Heart left ventricle (tissue), 16 donors: ENCODE measurements at regions of chr12 and their contacts with region 1.

Region 1: DNA sequence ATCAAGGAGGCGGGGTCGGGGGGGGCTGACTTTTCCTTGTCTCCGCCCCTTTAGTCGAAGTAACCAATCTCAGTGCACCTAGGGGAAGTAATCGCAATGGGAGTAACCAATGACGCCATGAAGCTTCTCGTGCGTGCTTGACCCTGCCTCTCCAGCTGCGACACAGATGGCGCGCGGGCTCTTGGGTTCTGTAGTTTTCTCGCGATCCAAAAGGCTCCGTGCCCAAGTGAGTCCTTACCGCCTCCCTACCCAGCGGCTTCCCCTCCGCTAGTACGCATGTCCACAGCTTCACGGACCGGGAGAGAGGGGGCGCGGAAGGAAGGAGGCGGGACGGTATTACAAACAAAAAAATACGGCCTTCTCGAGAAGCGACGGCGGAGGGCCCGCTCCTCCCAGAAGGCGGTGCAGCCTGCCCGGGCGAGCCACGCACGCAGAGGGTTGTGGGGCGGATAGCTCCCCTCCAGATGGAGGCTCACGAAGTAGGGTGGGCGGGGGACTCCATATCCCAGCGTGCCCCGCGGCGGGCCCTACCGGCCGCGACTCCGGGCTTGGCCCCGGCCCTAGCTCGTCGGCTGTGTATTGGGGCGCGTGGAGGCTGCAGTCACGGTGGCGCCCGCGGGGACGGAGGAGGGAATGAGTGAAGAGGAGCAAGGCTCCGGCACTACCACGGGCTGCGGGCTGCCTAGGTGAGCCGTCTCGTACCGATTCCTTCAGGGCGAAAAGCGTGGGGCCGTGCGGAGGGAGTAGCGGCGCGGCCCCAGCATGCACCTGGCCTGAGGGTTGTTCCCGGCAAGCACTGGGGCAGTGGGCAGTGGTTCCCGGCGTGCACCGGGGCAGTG is at the start of gene TARBP2:
- DNase-seq: peak; percentile 97 to 98 (median 98)
- ATAC-seq: peak; percentile 86 to 92 (median 88)
- H3K4me3 ChIP-seq: peak within 1 kb of the TSS; percentile 37 to 98 (median 77)
- H3K27ac ChIP-seq: peak within 1 kb of the TSS; percentile 90 to 100 (median 97)
- H3K4me1 ChIP-seq: peaks cover 5 to 61% (median 35%) of the 10 kb centered on the region in 12 donors
- H3K27me3 ChIP-seq: no peaks in the 10 kb centered on the region
- CTCF ChIP-seq: peak in 4 of 12 donors; percentile 13 to 34 (median 24)
- POLR2A ChIP-seq: peak in 1 of 2 donors; percentile 46
- total RNA-seq, gene TARBP2: 7.8 to 19.5 (median 10.1) TPM

Region 2: DNA sequence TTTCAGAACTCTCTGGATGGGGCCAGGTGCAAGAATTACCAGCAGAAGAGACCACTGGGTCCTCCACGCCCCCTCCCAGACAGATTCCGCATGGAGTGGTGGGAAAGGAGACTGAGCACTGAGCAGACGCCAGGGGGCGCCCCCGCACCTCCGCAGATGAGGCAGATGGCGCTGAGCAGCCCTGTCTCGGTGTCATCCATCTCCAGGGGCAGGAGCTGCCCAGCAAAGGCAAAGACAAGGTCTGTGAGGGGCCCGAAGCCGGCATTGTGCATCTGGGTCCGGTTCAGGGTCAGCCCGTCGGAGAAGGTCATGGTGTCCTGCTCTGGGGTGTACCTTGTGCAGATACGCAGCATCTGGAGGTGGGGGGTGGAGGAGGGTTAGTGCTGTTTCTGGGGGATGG is 287.6 kb before region 1 on chr12:
- intact Hi-C with region 1: loop called in 2 of 10 experiments (anchors 5 to 10 kb)
- DNase-seq: peak; percentile 84 to 92 (median 86)
- ATAC-seq: peak; percentile 74 to 82 (median 78)
- H3K4me3 ChIP-seq: peak overlapping the region in 8 of 12 donors; percentile 1 to 60 (median 43)
- H3K27ac ChIP-seq: peak overlapping the region in 11 of 12 donors; percentile 64 to 100 (median 98)
- H3K4me1 ChIP-seq: peaks cover 19 to 74% (median 59%) of the 10 kb centered on the region in 12 donors
- H3K27me3 ChIP-seq: no peaks in the 10 kb centered on the region
- CTCF ChIP-seq: peak; percentile 90 to 99 (median 96)
- POLR2A ChIP-seq: no peak

Region 3: DNA sequence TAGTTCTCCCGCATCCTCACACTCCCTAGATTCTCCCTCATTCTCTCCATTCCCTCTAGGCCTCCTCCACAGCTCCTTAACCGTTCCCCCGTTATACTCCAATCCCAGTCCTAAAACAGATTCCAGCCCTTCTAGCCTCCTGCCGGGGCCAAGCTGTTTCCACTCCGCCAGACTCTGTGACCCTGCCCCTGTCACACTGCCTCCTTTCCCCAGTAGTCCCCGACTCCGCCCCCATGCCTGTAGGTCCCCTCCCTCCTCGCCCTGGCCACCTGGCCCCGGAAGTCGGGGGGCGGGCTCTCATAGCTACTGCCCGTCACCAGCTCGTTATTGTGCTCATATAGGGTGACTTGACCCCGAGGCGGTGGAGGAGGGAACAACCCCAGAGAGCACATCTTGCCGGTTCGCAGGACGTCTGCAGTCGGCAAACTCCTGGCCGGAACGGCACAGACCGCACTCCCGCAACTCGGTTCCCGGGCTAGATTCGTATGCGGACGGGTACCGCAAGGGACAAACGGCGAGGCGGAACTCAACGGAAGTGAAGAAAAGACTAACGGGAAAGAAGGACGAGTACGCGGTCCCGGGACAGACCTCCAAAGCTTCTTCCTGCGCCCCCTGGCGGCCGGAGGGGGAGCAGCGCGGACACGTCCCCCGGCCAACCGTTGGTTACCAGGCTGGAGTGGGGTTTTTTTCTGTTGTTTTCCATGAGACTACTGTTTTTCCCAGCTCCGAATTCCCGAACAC is 179.8 kb before region 1 on chr12 and contains the start of gene AAAS:
- intact Hi-C with region 1: loop called in 9 of 10 experiments (anchors 2 to 10 kb)
- DNase-seq: peak; percentile 96 to 98 (median 97)
- ATAC-seq: peak; percentile 91 to 94 (median 93)
- H3K4me3 ChIP-seq: peak within 1 kb of the TSS; percentile 41 to 97 (median 78)
- H3K27ac ChIP-seq: peak within 1 kb of the TSS; percentile 86 to 96 (median 92)
- H3K4me1 ChIP-seq: peaks cover 0 to 44% (median 32%) of the 10 kb centered on the region in 12 donors
- H3K27me3 ChIP-seq: no peaks in the 10 kb centered on the region
- CTCF ChIP-seq: peak; percentile 98 to 100 (median 100)
- POLR2A ChIP-seq: peak in 1 of 2 donors; percentile 71
- total RNA-seq, gene AAAS: 26.7 to 44.5 (median 37.1) TPM

Region 4: GRCh38 chr12:53379389-53380103 is 121.4 kb before region 1 on chr12:
- intact Hi-C with region 1: loop called in 1 of 10 experiments (anchors 5 kb)
- DNase-seq: peak; percentile 95 to 100 (median 99)
- ATAC-seq: peak; percentile 87 to 91 (median 90)
- H3K4me3 ChIP-seq: peak overlapping the region; percentile 27 to 85 (median 64)
- H3K27ac ChIP-seq: peak overlapping the region; percentile 90 to 100 (median 98)
- H3K4me1 ChIP-seq: peaks cover 22 to 46% (median 42%) of the 10 kb centered on the region in 12 donors
- H3K27me3 ChIP-seq: no peaks in the 10 kb centered on the region
- CTCF ChIP-seq: no peak
- POLR2A ChIP-seq: peak; percentile 43 to 89

Region 5: DNA sequence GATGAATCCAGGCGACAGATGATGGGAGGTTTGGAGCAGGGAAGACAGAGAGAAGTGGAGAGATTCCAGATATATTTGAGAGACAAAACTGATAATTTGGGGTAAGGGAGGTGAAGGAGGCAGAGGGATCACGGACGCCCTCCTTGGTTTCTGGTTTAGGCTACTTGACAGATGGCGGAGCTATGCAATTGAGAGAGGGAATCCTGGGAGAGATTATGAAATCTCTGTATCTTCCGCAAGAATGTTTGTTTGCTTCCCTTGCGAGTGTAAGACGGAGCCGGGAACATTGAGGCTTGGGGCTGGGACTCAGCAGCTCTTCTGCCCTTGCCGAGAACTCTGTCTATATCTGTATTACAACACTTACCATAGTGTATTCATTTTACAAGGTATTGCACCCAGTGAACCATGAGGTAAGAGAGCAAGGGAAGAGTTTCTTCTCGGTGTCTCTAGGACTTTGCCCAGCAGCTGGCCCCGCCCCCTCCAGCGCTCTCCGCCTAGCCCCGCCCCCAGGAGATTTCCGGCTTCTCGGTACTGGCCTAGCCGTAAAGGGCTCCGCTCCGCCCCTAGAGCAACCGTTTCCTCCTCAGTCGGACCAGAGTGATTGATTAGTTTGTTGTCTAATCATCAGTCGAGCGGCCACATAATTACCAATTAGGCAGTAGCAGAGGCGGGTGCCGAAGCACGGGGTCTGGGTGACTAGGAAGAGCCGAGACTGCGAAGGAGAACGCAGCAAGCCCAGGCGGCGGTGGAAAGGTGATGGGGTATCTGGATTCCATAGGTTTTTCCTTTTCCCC is 59.8 kb before region 1 on chr12 and contains the start of gene PRR13:
- intact Hi-C with region 1: loop called in 1 of 10 experiments (anchors 2 kb)
- DNase-seq: peak; percentile 98 to 99 (median 99)
- ATAC-seq: peak; percentile 99
- H3K4me3 ChIP-seq: peak within 1 kb of the TSS; percentile 58 to 95 (median 70)
- H3K27ac ChIP-seq: peak within 1 kb of the TSS; percentile 73 to 93 (median 89)
- H3K4me1 ChIP-seq: peaks cover 5 to 37% (median 12%) of the 10 kb centered on the region in 12 donors
- H3K27me3 ChIP-seq: no peaks in the 10 kb centered on the region
- CTCF ChIP-seq: no peak
- POLR2A ChIP-seq: peak; percentile 50 to 92
- total RNA-seq, gene PRR13: 25.7 to 100 (median 53.1) TPM

Region 6: DNA sequence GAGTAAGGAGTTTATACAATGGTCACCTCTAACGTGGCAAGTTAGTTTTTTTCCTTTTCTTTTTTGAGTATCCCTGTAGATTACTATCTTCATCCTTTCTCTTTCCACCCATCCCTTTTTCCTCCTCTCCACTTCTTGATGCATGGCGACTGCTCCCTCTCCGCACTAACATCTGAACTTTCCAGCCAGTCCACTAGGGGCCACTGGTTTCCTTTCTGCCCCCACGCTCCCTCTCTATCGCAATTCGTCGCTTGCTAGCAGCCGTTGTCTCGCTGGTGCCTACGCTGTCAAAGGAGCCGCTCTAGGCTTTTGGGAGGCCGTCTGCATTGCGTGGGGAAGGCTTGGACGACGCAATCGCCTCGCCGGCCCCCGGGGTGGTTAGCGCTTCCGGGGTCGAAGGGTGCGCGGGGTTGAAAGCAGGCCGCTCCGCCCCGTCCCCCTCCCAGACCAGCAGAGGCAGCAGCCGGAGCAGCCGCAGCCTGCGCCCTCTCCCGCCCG is 49.3 kb before region 1 on chr12 and contains the start of gene PCBP2:
- intact Hi-C with region 1: loop called in 5 of 10 experiments (anchors 2 to 5 kb)
- DNase-seq: peak; percentile 99
- ATAC-seq: peak; percentile 97 to 98 (median 98)
- H3K4me3 ChIP-seq: peak within 1 kb of the TSS; percentile 59 to 83 (median 78)
- H3K27ac ChIP-seq: peak within 1 kb of the TSS; percentile 89 to 98 (median 96)
- H3K4me1 ChIP-seq: peaks cover 5 to 32% (median 26%) of the 10 kb centered on the region in 12 donors
- H3K27me3 ChIP-seq: no peaks in the 10 kb centered on the region
- CTCF ChIP-seq: peak; percentile 76 to 95 (median 86)
- POLR2A ChIP-seq: peak in 1 of 2 donors; percentile 72
- total RNA-seq, gene PCBP2: 293 to 642 (median 559) TPM

Region 7: GRCh38 chr12:53461059-53461458 is 39.9 kb before region 1 on chr12:
- intact Hi-C with region 1: loop called in 2 of 10 experiments (anchors 5 kb)
- DNase-seq: peak in 4 of 5 donors; percentile 70 to 75 (median 73)
- ATAC-seq: peak; percentile 83 to 93 (median 90)
- H3K4me3 ChIP-seq: peak overlapping the region in 1 of 12 donors; percentile 1
- H3K27ac ChIP-seq: peak overlapping the region in 11 of 12 donors; percentile 23 to 75 (median 60)
- H3K4me1 ChIP-seq: peaks cover 2 to 81% (median 49%) of the 10 kb centered on the region in 12 donors
- H3K27me3 ChIP-seq: no peaks in the 10 kb centered on the region
- CTCF ChIP-seq: no peak
- POLR2A ChIP-seq: peak; percentile 22 to 63